ENCODE measurements at regions of chr10 and their contacts with region 1.

Region 1: DNA sequence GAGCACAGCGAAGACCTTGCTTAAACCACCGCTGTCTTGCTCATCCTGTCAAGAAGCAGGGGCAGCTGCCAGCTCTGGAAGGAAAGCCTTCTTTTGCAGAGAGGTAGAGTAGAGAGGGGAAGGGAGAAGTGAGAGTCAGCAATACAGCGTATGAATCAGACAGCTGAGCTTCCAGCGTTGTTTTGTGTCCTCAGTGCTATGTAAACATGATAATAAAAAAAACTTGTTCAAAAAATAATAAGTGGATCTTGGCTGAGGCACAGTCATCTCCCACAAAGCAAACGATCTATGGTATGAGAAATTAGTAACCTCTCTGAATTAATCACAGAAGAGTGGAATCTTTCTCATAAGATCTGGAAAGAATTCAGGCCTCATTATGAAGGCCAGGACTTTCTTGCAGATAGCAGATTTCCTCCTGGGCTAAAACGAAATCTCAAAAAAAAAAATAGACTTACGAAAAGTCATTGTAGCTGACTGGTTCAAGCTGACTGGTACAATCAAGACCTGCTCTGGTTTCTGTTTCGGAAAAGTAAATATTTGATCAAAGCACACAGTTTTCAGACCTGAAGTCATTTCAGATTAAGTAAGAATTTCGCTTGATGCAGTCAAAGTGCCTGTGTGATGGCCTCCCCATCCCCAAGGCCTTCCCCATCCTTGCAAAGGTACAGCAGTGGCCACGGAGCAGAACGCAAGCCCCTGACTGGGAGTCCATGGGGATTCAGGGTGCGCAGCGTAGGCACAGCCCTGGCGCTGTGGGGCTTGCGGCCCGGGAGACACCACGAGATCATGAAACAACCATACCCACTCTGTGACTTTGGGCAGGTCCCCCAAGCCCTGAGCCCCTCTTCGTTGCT is 29.4 kb downstream of the CHST15 start:
- DNase-seq: peak; percentile 78
- ATAC-seq: peak; percentile 74
- H3K4me3 ChIP-seq: no peak overlapping the region; a peak in 3 of 6 replicates
- H3K27ac ChIP-seq: peak overlapping the region; percentile 56
- H3K4me1 ChIP-seq: peaks cover 97% of the 10 kb centered on the region
- H3K27me3 ChIP-seq: no peaks in the 10 kb centered on the region
- CTCF ChIP-seq: no peak
- EP300 ChIP-seq: no peak
- POLR2A ChIP-seq: no peak
- RAD21 ChIP-seq: no peak

Region 2: DNA sequence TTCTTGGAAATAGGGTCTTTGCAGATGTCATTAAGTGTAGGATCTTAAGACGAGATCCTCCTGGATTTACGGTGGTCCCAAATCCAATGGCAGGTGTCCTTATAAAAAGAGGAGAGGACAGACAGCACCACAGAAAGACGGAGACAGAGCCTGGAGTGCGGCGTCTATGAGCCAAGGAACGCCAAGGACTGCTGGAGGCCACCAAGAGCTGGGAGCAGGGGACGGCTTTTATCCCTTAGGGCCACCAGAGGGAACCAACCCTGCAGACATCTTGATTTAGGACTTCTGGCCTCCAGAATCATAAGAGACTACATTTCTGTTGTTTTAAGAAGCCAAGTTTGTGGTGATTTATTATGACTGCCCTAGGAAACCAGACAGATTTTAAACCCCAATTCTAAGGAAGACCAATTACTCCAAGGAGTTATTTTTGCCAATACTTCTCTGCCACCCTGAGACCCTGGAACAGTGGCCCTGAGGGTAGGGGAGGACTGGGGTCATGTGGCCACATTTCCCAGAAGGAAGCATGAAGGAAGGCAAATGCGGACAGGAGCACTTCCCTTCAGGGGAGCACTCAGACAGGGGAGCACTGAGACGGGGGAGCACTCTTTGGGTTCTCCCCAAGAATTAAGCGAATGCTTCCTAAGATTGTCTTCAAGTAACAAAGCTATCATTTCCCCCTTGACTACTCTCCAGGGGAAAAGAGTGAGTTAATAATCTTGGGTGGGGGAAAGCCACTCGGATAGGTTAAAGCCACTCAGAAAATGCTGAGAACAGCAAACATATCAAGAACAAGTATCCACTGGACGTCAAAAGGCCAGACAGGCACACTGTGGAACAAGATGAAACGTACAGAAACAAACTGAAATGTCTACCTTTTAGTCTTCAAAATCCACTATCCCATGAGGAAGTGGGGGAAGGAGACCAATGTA is 38.1 kb before region 1 on chr10:
- CTCF ChIA-PET with region 1: no interaction called
- POLR2A ChIA-PET with region 1: no interaction called
- in situ Hi-C with region 1: no loop called
- intact Hi-C with region 1: no loop called
- DNase-seq: peak; percentile 48
- ATAC-seq: peak; percentile 56
- H3K4me3 ChIP-seq: no peak overlapping the region
- H3K27ac ChIP-seq: no peak overlapping the region
- H3K4me1 ChIP-seq: peaks cover 20% of the 10 kb centered on the region; the same call in 1 of the 2 replicates
- H3K27me3 ChIP-seq: no peaks in the 10 kb centered on the region
- CTCF ChIP-seq: peak; percentile 47
- EP300 ChIP-seq: no peak
- POLR2A ChIP-seq: no peak
- RAD21 ChIP-seq: peak; percentile 30; the same call in 1 of the 2 replicates

Region 3: DNA sequence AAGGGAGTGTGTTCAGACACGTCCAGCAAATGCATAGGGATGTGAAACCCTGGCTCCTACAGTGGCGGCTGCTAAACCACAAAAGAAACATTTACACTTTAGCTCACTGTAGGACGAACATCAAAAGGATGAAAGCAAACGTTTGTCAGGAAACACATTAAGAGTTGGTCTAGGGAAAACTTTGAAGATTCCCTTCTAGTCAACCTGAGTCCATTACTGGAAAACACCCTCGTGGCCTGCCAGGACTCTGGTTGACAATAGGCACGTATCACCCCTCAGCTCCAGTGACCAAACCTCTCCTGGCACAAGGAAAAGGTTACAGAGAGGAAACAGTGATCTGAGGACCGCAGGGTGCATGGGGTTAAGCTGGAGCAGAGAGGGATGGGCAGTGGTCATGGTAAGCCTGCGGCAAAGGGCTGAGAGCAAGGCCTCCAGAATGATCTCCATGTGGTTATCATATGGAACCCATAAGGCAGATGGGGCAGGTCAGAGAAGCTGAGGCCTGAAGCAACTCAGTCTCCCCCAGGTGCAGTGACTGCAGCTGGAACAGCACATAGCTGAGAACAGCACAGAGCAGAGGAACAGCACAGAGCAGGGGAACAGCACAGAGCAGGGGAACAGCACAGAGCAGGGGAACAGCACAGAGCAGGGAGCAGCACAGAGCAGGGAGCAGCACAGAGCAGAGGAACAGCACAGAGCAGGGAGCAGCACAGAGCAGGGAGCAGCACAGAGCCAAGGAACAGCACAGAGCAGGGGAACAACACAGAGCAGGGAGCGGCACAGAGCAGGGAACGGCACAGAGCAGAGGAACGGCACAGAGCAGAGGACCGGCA is 20.5 kb before region 1 on chr10:
- CTCF ChIA-PET with region 1: no interaction called
- POLR2A ChIA-PET with region 1: interaction called, 30 read pairs
- in situ Hi-C with region 1: no loop called
- intact Hi-C with region 1: loop called (anchors 2 kb)
- DNase-seq: peak; percentile 97
- ATAC-seq: peak; percentile 93
- H3K4me3 ChIP-seq: no peak overlapping the region
- H3K27ac ChIP-seq: peak overlapping the region; percentile 74
- H3K4me1 ChIP-seq: peaks cover 93% of the 10 kb centered on the region
- H3K27me3 ChIP-seq: no peaks in the 10 kb centered on the region
- CTCF ChIP-seq: peak; percentile 7; the same call in 1 of the 2 replicates
- EP300 ChIP-seq: peak in 1 of 2 experiments; percentile 94; a peak in 2 of 4 replicates
- POLR2A ChIP-seq: peak in 1 of 2 experiments; percentile 46; a peak in 1 of 4 replicates
- RAD21 ChIP-seq: no peak